ENCODE measurements at regions of chr20 and their contacts with region 1.

Region 1: GRCh38 chr20:36128463-36129159 is 25.9 kb upstream of the EPB41L1 start:
- DNase-seq: no peak
- CTCF ChIP-seq: no peak

Region 2: DNA sequence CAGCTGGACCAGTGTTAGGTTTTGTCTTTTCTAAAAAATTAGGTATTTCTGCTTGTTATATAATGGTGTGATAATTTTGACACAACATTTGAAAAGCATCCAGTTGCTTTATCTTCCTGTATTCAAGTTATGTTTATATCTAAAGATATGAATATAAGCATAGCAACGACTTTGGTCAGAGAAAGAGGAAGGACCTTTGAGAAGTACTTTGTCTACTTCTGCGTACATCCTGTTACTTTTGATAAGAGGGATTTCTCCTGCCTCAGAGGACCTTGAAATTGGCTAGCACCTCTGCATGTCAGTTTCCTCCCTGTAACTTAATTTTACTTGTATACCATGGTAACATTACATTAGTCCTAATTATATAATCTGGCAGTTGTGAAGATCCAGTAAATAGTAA is 332.0 kb before region 1 on chr20:
- CTCF ChIA-PET with region 1: no interaction called
- POLR2A ChIA-PET with region 1: no interaction called
- DNase-seq: no peak
- CTCF ChIP-seq: no peak

Region 3: GRCh38 chr20:36145877-36146707 is 17.5 kb after region 1 on chr20:
- CTCF ChIA-PET with region 1: interaction called, 28 read pairs
- POLR2A ChIA-PET with region 1: no interaction called
- DNase-seq: no peak
- CTCF ChIP-seq: no peak

Region 4: GRCh38 chr20:36259177-36260061 is 130.8 kb after region 1 on chr20:
- CTCF ChIA-PET with region 1: no interaction called
- POLR2A ChIA-PET with region 1: no interaction called
- DNase-seq: no peak
- CTCF ChIP-seq: no peak